MCF 10A (cell line): ENCODE measurements at regions of chr3 and their contacts with region 1.

Region 1: GRCh38 chr3:69410250-69410649 is 24.4 kb upstream of the FRMD4B start:
- DNase-seq: peak; percentile 81
- H3K4me3 Mint-ChIP-seq: no peak overlapping the region
- H3K27ac Mint-ChIP-seq: no peak overlapping the region
- H3K4me1 Mint-ChIP-seq: peaks cover 13% of the 10 kb centered on the region
- H3K27me3 Mint-ChIP-seq: no peaks in the 10 kb centered on the region
- CTCF ChIP-seq: peak; percentile 66

Region 2: GRCh38 chr3:69425261-69425660 is 15.0 kb after region 1 on chr3:
- CTCF ChIA-PET with region 1: interaction called, 122 read pairs
- POLR2A ChIA-PET with region 1: interaction called, 7 read pairs
- intact Hi-C with region 1: no loop called
- DNase-seq: peak; percentile 62
- H3K4me3 Mint-ChIP-seq: no peak overlapping the region
- H3K27ac Mint-ChIP-seq: no peak overlapping the region
- H3K4me1 Mint-ChIP-seq: peaks cover 18% of the 10 kb centered on the region
- H3K27me3 Mint-ChIP-seq: no peaks in the 10 kb centered on the region
- CTCF ChIP-seq: peak; percentile 74